ENCODE measurements at regions of chr9 and their contacts with region 1.

Region 1: GRCh38 chr9:15211160-15211814 is 95.7 kb downstream of the TTC39B start:
- DNase-seq: peak; percentile 35
- ATAC-seq: no peak
- H3K4me3 ChIP-seq: no peak overlapping the region
- H3K27ac ChIP-seq: no peak overlapping the region
- H3K4me1 ChIP-seq: no peaks in the 10 kb centered on the region
- H3K27me3 ChIP-seq: no peaks in the 10 kb centered on the region
- CTCF ChIP-seq: peak; percentile 71

Region 2: GRCh38 chr9:15222313-15222712 is 11.0 kb after region 1 on chr9:
- CTCF ChIA-PET with region 1: no interaction called
- POLR2A ChIA-PET with region 1: no interaction called
- in situ Hi-C with region 1: no loop called
- intact Hi-C with region 1: no loop called
- DNase-seq: no peak
- ATAC-seq: no peak
- H3K4me3 ChIP-seq: no peak overlapping the region
- H3K27ac ChIP-seq: no peak overlapping the region
- H3K4me1 ChIP-seq: no peaks in the 10 kb centered on the region
- H3K27me3 ChIP-seq: no peaks in the 10 kb centered on the region
- CTCF ChIP-seq: no peak

Region 3: GRCh38 chr9:15249042-15249818 is 37.9 kb after region 1 on chr9:
- CTCF ChIA-PET with region 1: no interaction called
- POLR2A ChIA-PET with region 1: no interaction called
- in situ Hi-C with region 1: no loop called
- intact Hi-C with region 1: no loop called
- DNase-seq: no peak
- ATAC-seq: no peak
- H3K4me3 ChIP-seq: no peak overlapping the region
- H3K27ac ChIP-seq: no peak overlapping the region
- H3K4me1 ChIP-seq: no peaks in the 10 kb centered on the region
- H3K27me3 ChIP-seq: no peaks in the 10 kb centered on the region
- CTCF ChIP-seq: no peak

Region 4: DNA sequence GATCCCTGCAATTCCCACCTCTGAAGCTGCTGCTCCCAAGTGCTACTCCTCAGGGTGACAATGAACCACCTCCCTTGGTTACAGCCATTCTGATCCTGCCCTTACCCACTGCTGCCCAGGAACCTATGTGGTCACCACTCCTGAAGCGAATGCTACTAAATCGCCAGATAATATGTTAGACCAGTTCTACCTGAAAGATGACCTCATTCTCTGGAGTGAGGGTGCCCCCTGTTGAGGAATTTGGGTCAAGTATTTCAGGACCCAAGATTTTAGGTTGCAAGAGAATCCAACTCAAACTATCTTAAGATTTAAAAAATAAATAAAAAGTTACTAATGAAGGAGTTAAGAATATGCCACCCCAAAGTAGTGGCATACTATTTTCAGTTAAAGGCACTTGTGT is 205.6 kb after region 1 on chr9:
- CTCF ChIA-PET with region 1: no interaction called
- POLR2A ChIA-PET with region 1: no interaction called
- in situ Hi-C with region 1: no loop called
- intact Hi-C with region 1: loop called (anchors 5 kb)
- DNase-seq: no peak
- ATAC-seq: no peak
- H3K4me3 ChIP-seq: no peak overlapping the region
- H3K27ac ChIP-seq: no peak overlapping the region
- H3K4me1 ChIP-seq: no peaks in the 10 kb centered on the region
- H3K27me3 ChIP-seq: no peaks in the 10 kb centered on the region
- CTCF ChIP-seq: peak; percentile 24; the same call in 1 of the 2 replicates

Region 5: GRCh38 chr9:15622318-15622971 is 411.2 kb after region 1 on chr9:
- CTCF ChIA-PET with region 1: no interaction called
- POLR2A ChIA-PET with region 1: no interaction called
- in situ Hi-C with region 1: no loop called
- intact Hi-C with region 1: loop called (anchors 10 kb)
- DNase-seq: no peak
- ATAC-seq: no peak
- H3K4me3 ChIP-seq: no peak overlapping the region
- H3K27ac ChIP-seq: no peak overlapping the region
- H3K4me1 ChIP-seq: no peaks in the 10 kb centered on the region
- H3K27me3 ChIP-seq: no peaks in the 10 kb centered on the region
- CTCF ChIP-seq: peak; percentile 19; the same call in 1 of the 2 replicates